Uterus (tissue), 4 donors: ENCODE measurements at regions of chr1 and their contacts with region 1.

Region 1: DNA sequence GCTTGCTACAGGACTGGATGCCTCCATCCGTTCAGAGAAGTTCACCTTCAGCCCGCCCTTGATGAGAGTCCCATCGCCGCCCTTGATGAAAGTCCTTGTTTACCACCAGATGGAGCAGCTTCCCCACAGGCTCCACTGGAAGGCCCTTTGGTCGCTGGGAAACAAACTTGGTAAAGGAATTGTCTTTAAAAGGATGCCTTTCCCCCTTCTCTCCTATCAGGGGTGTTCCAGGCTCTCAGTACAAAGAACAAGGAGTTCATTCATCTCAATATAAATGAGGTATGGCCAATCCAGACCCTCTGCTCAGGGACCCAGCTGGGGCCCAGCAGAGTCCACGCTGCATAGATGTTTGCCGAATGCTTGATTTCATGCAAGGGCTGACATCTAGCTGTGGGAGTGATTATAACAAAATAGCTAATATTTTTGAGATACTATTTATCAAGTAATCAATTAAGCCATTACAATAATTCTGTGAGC is 50.8 kb downstream of the CAPN9 start:
- DNase-seq: peak; percentile 66 to 69
- H3K4me3 ChIP-seq: no peak overlapping the region
- H3K27ac ChIP-seq: no peak overlapping the region
- H3K4me1 ChIP-seq: no peaks in the 10 kb centered on the region
- H3K27me3 ChIP-seq: no peaks in the 10 kb centered on the region
- CTCF ChIP-seq: peak; percentile 74 to 85 (median 81)
- POLR2A ChIP-seq: no peak

Region 2: GRCh38 chr1:230917284-230918135 is 119.5 kb after region 1 on chr1:
- intact Hi-C with region 1: loop called (anchors 2 kb)
- DNase-seq: peak; percentile 55 to 66
- H3K4me3 ChIP-seq: no peak overlapping the region
- H3K27ac ChIP-seq: no peak overlapping the region
- H3K4me1 ChIP-seq: no peaks in the 10 kb centered on the region
- H3K27me3 ChIP-seq: no peaks in the 10 kb centered on the region
- CTCF ChIP-seq: peak; percentile 53 to 57 (median 56)
- POLR2A ChIP-seq: no peak

Region 3: GRCh38 chr1:231211005-231211857 is 413.3 kb after region 1 on chr1:
- intact Hi-C with region 1: loop called (anchors 10 kb)
- DNase-seq: peak; percentile 63 to 70
- H3K4me3 ChIP-seq: peak overlapping the region; percentile 21 to 41
- H3K27ac ChIP-seq: no peak overlapping the region
- H3K4me1 ChIP-seq: no peaks in the 10 kb centered on the region
- H3K27me3 ChIP-seq: no peaks in the 10 kb centered on the region
- CTCF ChIP-seq: peak; percentile 82 to 83 (median 82)
- POLR2A ChIP-seq: no peak